Pancreas (tissue), 10 donors: ENCODE measurements at regions of chr20 and their contacts with region 1.

Region 1: DNA sequence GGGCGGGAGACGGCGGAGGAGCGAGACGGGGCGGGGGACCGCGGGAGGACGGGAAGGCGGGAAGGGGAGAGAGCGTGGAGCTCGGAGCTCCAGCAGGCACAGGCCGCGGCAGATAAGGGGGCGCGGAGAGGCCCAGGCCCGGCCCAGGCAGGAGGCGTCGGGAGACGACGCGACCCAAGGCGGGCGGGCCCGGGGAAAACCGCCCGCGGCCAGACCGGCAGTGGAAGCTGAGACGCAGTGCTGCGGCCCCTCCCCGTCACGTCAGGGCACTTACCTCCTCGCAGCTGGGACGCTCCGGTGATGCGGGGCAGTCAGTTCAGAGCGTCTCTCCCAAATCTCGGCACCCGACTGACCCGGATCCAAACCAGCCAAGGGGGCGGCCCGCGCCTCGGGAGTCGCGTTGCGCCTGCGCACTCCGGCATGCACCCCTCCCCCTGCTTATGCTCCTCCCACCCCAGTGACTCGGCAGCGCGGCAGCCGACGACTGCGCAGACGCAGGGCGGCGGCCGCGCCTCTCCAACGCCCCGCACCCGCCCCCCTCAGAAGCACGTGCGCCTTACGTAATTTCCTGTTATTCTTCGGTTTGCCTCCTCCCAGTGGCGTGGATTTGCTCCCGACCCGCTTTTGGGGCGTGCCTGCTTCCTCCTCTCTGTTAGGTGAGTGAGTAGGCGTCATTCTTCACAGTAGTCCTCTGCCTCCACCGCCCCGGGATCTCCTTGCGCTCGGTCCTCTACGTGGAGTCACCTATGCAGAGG is at the start of gene OSER1:
- DNase-seq: peak; percentile 96 to 99 (median 98)
- ATAC-seq: peak; percentile 89 to 96 (median 93)
- H3K4me3 ChIP-seq: peak within 1 kb of the TSS; percentile 49 to 94 (median 87)
- H3K27ac ChIP-seq: peak within 1 kb of the TSS; percentile 81 to 98 (median 92)
- H3K4me1 ChIP-seq: peaks cover 17 to 32% (median 30%) of the 10 kb centered on the region in 3 donors
- H3K27me3 ChIP-seq: no peaks in the 10 kb centered on the region
- CTCF ChIP-seq: no peak
- total RNA-seq, gene OSER1: 8.0 to 13.5 (median 11.1) TPM

Region 2: DNA sequence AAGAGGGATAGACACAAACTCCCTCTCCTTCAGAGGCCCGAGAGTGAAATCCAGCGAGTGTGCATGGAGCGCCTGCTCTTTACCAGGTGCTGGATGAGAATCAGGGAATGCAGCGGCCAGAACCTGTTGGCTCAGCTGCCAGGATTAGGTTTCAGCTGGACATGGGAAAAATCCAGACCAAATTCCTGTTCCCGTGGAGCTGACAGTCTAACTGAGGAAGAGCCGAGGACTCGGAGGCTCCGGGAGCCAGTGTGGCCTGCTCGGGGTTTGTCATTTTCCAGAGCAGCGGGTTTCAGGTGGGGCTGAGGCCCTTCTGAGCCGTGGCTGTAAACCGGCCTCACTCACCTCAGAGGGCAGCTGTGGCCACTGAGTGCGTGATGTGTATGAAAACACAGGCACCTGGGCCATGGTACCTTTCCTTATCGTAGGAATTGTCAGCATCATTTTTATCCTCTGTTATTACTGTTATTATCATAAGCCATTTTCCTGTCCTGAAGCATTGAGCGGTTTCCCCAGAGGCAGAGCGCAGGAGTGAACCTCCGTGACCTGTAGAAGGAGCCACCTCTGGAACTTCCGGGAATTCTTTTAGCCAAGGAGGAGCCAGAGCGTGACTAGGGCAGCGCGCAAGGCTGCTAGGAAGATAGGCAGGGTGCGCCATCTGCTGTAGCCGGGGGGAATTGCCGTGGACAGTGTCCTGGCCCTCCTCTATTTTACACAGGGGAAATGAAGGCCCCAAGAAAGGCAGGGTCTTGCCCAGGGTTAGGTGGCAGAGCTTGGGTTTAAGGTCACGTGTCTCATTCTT is 399.1 kb after region 1 on chr20:
- intact Hi-C with region 1: loop called in 1 of 3 experiments (anchors 10 kb)
- DNase-seq: peak; percentile 86 to 94 (median 92)
- ATAC-seq: peak; percentile 98 to 99 (median 98)
- H3K4me3 ChIP-seq: peak overlapping the region in 2 of 4 donors; percentile 13 to 39
- H3K27ac ChIP-seq: peak overlapping the region; percentile 53 to 88 (median 72)
- H3K4me1 ChIP-seq: peaks cover 0 to 9% (median 5%) of the 10 kb centered on the region in 3 donors
- H3K27me3 ChIP-seq: no peaks in the 10 kb centered on the region
- CTCF ChIP-seq: peak; percentile 86 to 94 (median 91)